Naive thymus-derived CD4-positive, alpha-beta T cell (primary cell): ENCODE measurements at regions of chr13 and their contacts with region 1.

Region 1: GRCh38 chr13:36858290-36858689 is 39.3 kb downstream of the RFXAP start:
- DNase-seq: peak in 2 of 9 donors; percentile 1 to 3
- ATAC-seq: no peak
- H3K4me3 ChIP-seq: no peak overlapping the region
- H3K4me3 Mint-ChIP-seq: no peak overlapping the region
- H3K27ac ChIP-seq: no peak overlapping the region
- H3K27ac Mint-ChIP-seq: no peak overlapping the region
- H3K4me1 ChIP-seq: no peaks in the 10 kb centered on the region
- H3K4me1 Mint-ChIP-seq: peaks cover 0 to 11% (median 0%) of the 10 kb centered on the region in 7 donors
- H3K27me3 ChIP-seq: no peaks in the 10 kb centered on the region
- H3K27me3 Mint-ChIP-seq: peaks cover 5 to 41% (median 25%) of the 10 kb centered on the region in 5 donors

Region 2: DNA sequence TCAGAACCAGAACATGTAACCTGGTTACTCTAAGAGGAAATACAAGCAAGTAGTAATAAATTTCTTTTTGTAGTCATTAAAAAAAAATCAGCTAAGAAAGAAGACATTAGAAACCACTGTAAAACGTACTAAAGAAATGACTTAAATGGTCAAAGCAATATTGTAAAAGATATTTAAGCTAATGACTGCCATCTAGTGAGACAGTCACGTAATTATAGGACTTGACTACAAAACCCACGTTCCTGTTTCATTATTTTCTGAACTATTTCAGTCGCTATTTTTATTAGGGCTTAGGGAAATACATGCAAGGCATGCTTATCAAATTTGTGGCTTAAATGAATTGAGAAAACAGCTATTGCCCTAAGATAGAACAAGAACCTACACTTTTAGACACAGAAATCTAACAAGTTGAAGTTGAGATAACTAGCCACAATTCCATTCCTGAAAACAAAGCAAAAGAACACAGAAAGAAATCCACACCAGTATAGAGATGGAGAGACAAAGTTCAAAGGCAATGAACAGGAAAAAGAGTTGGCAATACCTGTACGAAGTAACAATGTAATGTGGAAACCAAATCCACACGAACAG is 123.0 kb after region 1 on chr13:
- CTCF ChIA-PET with region 1: no interaction called
- POLR2A ChIA-PET with region 1: no interaction called
- intact Hi-C with region 1: loop called (anchors 1 to 5 kb)
- DNase-seq: peak in 3 of 9 donors; percentile 2 to 18 (median 5)
- ATAC-seq: peak; percentile 49
- H3K4me3 ChIP-seq: no peak overlapping the region
- H3K4me3 Mint-ChIP-seq: no peak overlapping the region
- H3K27ac ChIP-seq: no peak overlapping the region
- H3K27ac Mint-ChIP-seq: peak overlapping the region in 1 of 9 donors; percentile 10
- H3K4me1 ChIP-seq: no peaks in the 10 kb centered on the region
- H3K4me1 Mint-ChIP-seq: peaks cover 0 to 15% (median 2%) of the 10 kb centered on the region in 7 donors
- H3K27me3 ChIP-seq: no peaks in the 10 kb centered on the region
- H3K27me3 Mint-ChIP-seq: no peaks in the 10 kb centered on the region

Region 3: GRCh38 chr13:37068962-37069361 is 210.7 kb after region 1 on chr13:
- CTCF ChIA-PET with region 1: no interaction called
- POLR2A ChIA-PET with region 1: no interaction called
- intact Hi-C with region 1: loop called (anchors 1 to 2 kb)
- DNase-seq: no peak
- ATAC-seq: no peak
- H3K4me3 ChIP-seq: no peak overlapping the region
- H3K4me3 Mint-ChIP-seq: no peak overlapping the region
- H3K27ac ChIP-seq: no peak overlapping the region
- H3K27ac Mint-ChIP-seq: no peak overlapping the region
- H3K4me1 ChIP-seq: no peaks in the 10 kb centered on the region
- H3K4me1 Mint-ChIP-seq: no peaks in the 10 kb centered on the region
- H3K27me3 ChIP-seq: no peaks in the 10 kb centered on the region
- H3K27me3 Mint-ChIP-seq: peaks cover 0 to 23% (median 7%) of the 10 kb centered on the region in 5 donors